H1 (cell line): ENCODE measurements at regions of chr17 and their contacts with region 1.

Region 1: DNA sequence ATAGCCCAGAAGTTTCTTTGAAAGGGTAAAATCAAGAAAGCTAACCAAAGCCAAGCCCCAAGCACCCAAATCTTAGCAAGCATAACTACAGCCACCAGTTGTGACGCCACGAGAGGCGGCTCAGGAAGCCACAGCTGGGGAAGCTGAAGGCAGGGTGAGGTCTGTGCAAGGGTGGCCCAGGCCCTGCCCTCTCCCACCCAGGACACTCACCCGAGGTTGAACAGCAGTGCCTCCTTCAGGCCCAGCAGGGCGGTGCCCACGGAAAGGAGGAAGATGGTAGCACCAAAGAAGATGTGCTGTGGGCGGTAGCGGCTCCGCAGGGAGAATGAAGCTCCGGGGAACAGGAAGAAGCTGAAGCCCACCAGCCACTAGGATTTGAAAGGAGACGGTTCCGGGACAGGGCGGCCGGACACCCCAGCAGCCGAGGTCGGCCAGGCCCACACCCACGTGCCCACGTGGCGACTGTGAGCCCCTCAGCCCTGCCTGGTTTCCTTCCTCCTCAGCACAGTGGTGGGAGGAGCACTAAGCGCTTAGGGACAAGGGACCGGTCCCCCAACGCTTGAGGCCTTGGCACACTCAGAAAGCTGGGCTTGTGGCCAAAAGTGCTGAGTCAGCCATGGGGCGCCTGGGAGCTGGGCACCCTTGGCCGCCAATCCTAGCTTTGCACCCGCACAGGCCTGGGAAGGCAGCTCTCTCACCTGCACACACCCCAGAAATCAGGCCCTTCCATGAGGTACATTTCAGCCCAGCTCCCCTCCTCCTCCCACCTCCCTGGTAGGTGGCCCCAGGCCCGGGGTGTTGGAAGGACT is 11.0 kb downstream of the CYB561 start:
- DNase-seq: no peak
- H3K4me3 ChIP-seq: no peak overlapping the region
- H3K27ac ChIP-seq: no peak overlapping the region
- H3K4me1 ChIP-seq: peaks cover 0 to 18% (median 6%) of the 10 kb centered on the region in 4 experiments; a peak in 5 of 7 replicates
- H3K27me3 ChIP-seq: no peaks in the 10 kb centered on the region
- CTCF ChIP-seq: peak; percentile 37 to 68 (median 66); a peak in 3 of 4 replicates
- EP300 ChIP-seq: no peak
- POLR2A ChIP-seq: no peak
- RAD21 ChIP-seq: peak; percentile 32 to 49

Region 2: DNA sequence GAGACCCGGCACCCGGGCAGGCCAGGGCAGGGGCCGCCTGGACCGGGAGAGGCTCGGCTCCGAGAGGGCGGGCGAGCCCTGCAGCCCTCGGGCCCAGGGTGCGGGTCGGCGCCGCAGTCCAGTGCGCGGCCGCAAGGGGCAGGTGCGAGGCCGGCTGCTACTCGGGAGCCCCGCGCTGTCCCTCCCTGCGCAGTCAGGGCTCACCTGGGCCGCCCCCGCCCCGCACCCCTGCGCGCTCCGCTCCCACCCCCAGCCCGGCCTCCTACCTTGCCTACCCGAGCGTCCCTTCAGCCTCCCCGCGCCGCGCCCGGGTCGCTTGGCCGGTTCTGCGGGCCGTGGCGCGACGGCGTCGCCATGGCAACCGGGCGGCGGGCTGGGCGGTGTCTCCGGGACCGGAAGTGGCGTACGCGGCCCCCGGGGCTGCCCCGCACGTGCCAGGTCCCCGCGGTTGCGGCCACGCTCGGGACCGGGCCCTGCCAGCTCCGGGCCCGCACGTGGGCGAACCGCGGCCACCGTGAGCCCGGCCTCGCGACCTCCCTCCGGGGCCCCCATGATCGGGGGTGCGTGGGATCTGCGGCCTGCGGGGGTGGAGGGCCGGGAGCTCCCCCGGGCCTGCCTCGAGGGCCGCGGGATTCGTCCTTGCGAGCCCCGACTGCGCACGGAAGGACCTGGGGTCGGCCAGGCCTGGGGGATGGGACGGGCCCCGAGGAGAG is 11.1 kb after region 1 on chr17 and contains the start of gene CYB561:
- CTCF ChIA-PET with region 1: interaction called, 415 read pairs
- POLR2A ChIA-PET with region 1: interaction called, 33 read pairs
- DNase-seq: peak in 1 of 2 experiments; percentile 92
- H3K4me3 ChIP-seq: peak within 1 kb of the TSS; percentile 49 to 74 (median 55)
- H3K27ac ChIP-seq: no peak within 1 kb of the TSS; the same call in 1 of the 2 replicates
- H3K4me1 ChIP-seq: peaks cover 0 to 20% (median 10%) of the 10 kb centered on the region in 4 experiments; a peak in 6 of 7 replicates
- H3K27me3 ChIP-seq: peaks cover 0 to 10% (median 2%) of the 10 kb centered on the region in 4 experiments; a peak in 2 of 7 replicates
- CTCF ChIP-seq: peak; percentile 56 to 86 (median 68)
- EP300 ChIP-seq: no peak
- POLR2A ChIP-seq: peak in 1 of 2 experiments; percentile 37; a peak in 1 of 3 replicates
- RAD21 ChIP-seq: peak; percentile 20 to 39; a peak in 2 of 4 replicates
- total RNA-seq, gene CYB561: 23.4 and 26.0 TPM in 2 replicates

Region 3: GRCh38 chr17:63478791-63479494 is 43.9 kb after region 1 on chr17:
- CTCF ChIA-PET with region 1: interaction called, 758 read pairs
- POLR2A ChIA-PET with region 1: interaction called, 10 read pairs
- DNase-seq: peak; percentile 65 to 91
- H3K4me3 ChIP-seq: no peak overlapping the region
- H3K27ac ChIP-seq: no peak overlapping the region
- H3K4me1 ChIP-seq: peaks cover 0 to 22% (median 17%) of the 10 kb centered on the region in 4 experiments; a peak in 6 of 7 replicates
- H3K27me3 ChIP-seq: peaks cover 0 to 27% (median 18%) of the 10 kb centered on the region in 4 experiments; a peak in 5 of 7 replicates
- CTCF ChIP-seq: peak; percentile 96 to 99 (median 98)
- EP300 ChIP-seq: no peak
- POLR2A ChIP-seq: no peak
- RAD21 ChIP-seq: peak; percentile 79 to 88

Region 4: DNA sequence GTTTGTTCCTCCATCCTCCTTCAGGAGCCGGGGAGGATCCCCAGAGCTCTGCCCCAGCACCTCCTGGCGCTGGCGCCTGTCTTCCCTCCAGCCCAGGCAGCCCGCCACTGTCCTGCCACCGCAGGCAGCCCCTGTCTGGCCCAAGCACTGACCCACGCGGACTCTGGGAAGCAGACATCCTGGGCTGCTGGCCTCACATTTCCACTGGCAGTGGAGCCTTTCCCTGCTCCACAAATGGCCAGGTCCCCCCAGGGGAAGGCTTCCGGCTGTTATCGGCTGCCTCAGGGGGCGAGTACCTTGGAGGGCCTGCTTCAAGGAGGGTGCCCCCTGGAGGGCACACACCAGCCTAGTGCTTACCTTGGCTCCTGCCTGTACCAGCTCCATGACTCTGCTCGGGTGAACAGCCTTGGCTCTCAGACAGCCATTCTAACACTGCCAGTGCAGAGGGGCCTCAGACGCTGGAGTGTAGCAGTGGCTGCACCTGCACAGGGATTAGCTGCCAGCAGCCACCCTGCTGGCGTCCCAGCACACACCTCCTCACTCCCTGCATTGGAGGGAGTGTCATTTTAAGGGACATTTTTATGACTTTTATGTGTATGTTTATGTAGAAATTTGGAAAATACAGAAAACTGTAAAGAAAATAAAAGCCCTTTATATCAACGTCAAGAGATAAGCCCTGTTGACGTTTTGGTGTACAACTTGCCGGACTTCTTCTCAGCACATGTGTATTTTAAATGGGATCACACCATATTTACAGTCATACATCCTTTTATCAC is 62.8 kb after region 1 on chr17:
- CTCF ChIA-PET with region 1: interaction called, 17 read pairs
- POLR2A ChIA-PET with region 1: interaction called, 5 read pairs
- DNase-seq: peak in 1 of 2 experiments; percentile 81
- H3K4me3 ChIP-seq: no peak overlapping the region
- H3K27ac ChIP-seq: no peak overlapping the region
- H3K4me1 ChIP-seq: peaks cover 0 to 6% (median 0%) of the 10 kb centered on the region in 4 experiments; a peak in 1 of 7 replicates
- H3K27me3 ChIP-seq: no peaks in the 10 kb centered on the region
- CTCF ChIP-seq: peak; percentile 39 to 61 (median 51)
- EP300 ChIP-seq: no peak
- POLR2A ChIP-seq: no peak
- RAD21 ChIP-seq: peak; percentile 12 to 38; a peak in 3 of 4 replicates

Region 5: GRCh38 chr17:63549946-63550807 is 115.1 kb after region 1 on chr17 and contains the start of gene DCAF7:
- CTCF ChIA-PET with region 1: interaction called, 10 read pairs
- POLR2A ChIA-PET with region 1: no interaction called
- DNase-seq: peak; percentile 96 to 97
- H3K4me3 ChIP-seq: peak within 1 kb of the TSS; percentile 88 to 95 (median 90)
- H3K27ac ChIP-seq: peak within 1 kb of the TSS; percentile 68; the same call in 1 of the 2 replicates
- H3K4me1 ChIP-seq: peaks cover 0 to 4% (median 3%) of the 10 kb centered on the region in 4 experiments; a peak in 5 of 7 replicates
- H3K27me3 ChIP-seq: no peaks in the 10 kb centered on the region
- CTCF ChIP-seq: no peak
- EP300 ChIP-seq: no peak
- POLR2A ChIP-seq: peak in 1 of 2 experiments; percentile 78; a peak in 2 of 3 replicates
- RAD21 ChIP-seq: no peak
- total RNA-seq, gene DCAF7: 87.3 and 94.1 TPM in 2 replicates

Region 6: GRCh38 chr17:63621766-63622519 is 186.9 kb after region 1 on chr17 and contains the start of gene MAP3K3:
- CTCF ChIA-PET with region 1: interaction called, 11 read pairs
- POLR2A ChIA-PET with region 1: interaction called, 3 read pairs
- DNase-seq: peak; percentile 97 to 99
- H3K4me3 ChIP-seq: peak within 1 kb of the TSS; percentile 64 to 82 (median 72)
- H3K27ac ChIP-seq: peak within 1 kb of the TSS; percentile 41; the same call in 1 of the 2 replicates
- H3K4me1 ChIP-seq: peaks cover 2 to 5% (median 3%) of the 10 kb centered on the region in 4 experiments; a peak in 3 of 7 replicates
- H3K27me3 ChIP-seq: no peaks in the 10 kb centered on the region
- CTCF ChIP-seq: no peak
- EP300 ChIP-seq: no peak
- POLR2A ChIP-seq: peak; percentile 58 to 95
- RAD21 ChIP-seq: peak; percentile 0 to 2; a peak in 2 of 4 replicates
- total RNA-seq, gene MAP3K3: 21.0 and 22.6 TPM in 2 replicates